Dendritic cell treated with granulocyte-macrophage colony-stimulating factor and Interleukin-4, amounts not matched to agents 40 ng/mL and 50 ng/mL, for 4 days (primary cell): ENCODE measurements at regions of chr7 and their contacts with region 1.

Region 1: GRCh38 chr7:88243345-88243909 is 23.6 kb upstream of the SRI start:
- H3K4me3 Mint-ChIP-seq: no peak overlapping the region
- H3K27ac Mint-ChIP-seq: peak overlapping the region; percentile 58
- H3K4me1 Mint-ChIP-seq: peaks cover 14% of the 10 kb centered on the region
- H3K27me3 Mint-ChIP-seq: no peaks in the 10 kb centered on the region

Region 2: DNA sequence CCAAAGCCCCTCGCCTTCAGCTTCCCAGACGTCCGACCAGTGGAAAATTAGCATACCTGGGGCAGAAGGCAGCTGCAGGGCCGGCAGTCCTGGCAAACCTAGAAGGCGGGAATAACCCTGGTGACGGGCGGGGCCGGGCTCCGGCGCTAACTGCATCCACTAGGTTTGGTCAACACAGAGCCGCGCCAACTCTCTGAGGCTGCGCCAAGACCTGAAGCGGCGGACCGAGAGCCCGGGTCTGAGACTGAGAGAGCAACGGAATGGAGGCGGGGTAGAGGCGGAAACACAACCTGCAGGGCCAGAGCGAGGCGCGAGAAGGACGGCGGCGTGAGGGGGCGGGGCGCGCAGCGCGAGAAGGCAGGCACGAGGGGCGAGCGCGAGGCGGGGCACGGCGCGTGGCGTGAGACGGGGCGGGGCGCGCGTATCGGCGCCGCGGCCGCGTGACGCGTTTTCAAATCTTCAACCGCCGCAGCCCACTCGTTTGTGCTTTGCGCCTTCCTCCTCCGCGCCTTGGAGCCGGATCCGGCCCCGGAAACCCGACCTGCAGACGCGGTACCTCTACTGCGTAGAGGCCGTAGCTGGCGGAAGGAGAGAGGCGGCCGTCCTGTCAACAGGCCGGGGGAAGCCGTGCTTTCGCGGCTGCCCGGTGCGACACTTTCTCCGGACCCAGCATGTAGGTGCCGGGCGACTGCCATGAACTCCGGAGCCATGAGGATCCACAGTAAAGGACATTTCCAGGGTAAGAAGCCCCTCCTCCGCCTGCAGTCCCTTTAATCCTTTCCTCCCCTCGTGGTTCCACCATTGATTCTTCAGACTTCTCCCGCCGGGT is 367.2 kb before region 1 on chr7 and contains the starts of genes DBF4 and SLC25A40:
- intact Hi-C with region 1: no loop called
- H3K4me3 Mint-ChIP-seq: peak within 1 kb of the TSS; percentile 96
- H3K27ac Mint-ChIP-seq: peak within 1 kb of the TSS; percentile 100
- H3K4me1 Mint-ChIP-seq: peaks cover 41% of the 10 kb centered on the region
- H3K27me3 Mint-ChIP-seq: no peaks in the 10 kb centered on the region

Region 3: GRCh38 chr7:88151119-88151790 is 92.2 kb before region 1 on chr7:
- intact Hi-C with region 1: no loop called
- H3K4me3 Mint-ChIP-seq: no peak overlapping the region
- H3K27ac Mint-ChIP-seq: no peak overlapping the region
- H3K4me1 Mint-ChIP-seq: peaks cover 9% of the 10 kb centered on the region
- H3K27me3 Mint-ChIP-seq: no peaks in the 10 kb centered on the region

Region 4: DNA sequence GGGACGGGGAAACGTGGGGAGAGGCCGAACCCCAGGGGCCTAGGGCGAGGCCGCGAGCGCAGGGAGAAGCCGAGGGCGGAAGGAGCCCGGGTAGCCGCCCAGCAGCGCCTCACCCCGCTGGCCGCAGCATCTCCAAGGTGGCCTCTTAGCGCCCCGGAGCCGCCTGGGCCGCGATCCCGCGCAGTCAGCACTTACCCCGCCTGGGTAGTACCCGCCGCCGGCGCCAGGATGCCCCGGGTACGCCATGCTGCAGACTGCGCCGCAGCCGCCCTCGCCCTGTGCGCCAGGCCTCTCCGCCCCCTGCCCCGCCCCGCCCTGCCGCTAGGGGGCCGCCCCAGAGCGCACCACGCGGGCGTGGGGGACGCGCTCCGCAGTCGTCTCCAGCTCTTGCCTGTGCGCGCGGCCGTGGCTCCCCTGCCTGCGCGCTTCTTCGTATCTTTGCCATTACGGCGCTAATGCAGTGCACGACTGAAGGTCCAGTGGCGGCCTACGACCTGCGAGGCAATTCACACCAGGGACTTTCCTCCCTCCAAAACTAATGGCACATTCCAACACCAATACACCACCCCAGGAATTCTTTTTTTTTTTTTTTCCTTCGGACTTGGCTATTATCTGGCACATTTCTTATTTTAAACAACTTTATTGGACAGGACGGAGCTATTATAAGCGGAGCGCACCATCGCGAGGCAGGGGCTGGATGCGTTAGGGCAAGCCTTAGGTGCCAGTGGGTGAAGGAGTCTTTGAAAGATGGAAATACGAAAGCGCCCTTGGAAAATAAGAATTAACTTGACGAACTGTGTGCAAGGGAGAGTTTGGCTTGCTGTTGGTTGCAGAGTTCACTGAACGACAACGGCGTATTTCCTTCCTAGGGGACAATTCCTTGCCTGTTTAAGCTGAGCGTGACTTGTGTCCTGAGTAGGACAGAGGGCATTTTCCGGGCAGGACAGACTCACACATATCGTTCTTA is 23.4 kb before region 1 on chr7 and contains the start of gene SRI:
- intact Hi-C with region 1: loop called (anchors 2 kb)
- H3K4me3 Mint-ChIP-seq: peak within 1 kb of the TSS; percentile 80
- H3K27ac Mint-ChIP-seq: peak within 1 kb of the TSS; percentile 95
- H3K4me1 Mint-ChIP-seq: peaks cover 25% of the 10 kb centered on the region
- H3K27me3 Mint-ChIP-seq: no peaks in the 10 kb centered on the region

Region 5: GRCh38 chr7:88268863-88269262 is 25.4 kb after region 1 on chr7:
- intact Hi-C with region 1: no loop called
- H3K4me3 Mint-ChIP-seq: no peak overlapping the region
- H3K27ac Mint-ChIP-seq: no peak overlapping the region
- H3K4me1 Mint-ChIP-seq: peaks cover 11% of the 10 kb centered on the region
- H3K27me3 Mint-ChIP-seq: no peaks in the 10 kb centered on the region

Region 6: DNA sequence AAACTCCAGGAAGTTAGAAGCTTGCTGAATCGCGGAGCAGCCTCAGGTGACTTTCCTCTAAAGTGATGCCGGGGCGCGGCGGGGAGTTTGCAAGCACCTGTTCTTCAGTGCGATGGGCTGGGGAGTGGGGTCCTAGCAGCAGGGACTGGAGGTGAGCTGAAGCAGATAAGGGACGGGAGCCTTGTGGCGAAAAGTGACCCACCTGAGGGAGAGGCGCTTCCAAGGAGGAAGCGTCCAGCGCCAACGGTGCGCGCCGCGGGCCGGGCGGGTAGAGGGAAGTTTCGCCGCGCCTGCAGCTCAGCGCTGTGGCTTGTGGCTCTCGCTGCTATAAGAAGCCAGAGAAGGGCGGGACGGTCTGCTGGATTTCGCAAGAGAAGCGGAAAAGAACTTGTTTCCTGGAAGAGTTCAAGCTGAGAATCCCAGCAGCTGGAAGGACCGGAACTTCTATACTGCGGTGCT is 63.2 kb after region 1 on chr7 and contains the start of gene STEAP4:
- intact Hi-C with region 1: loop called (anchors 10 kb)
- H3K4me3 Mint-ChIP-seq: peak within 1 kb of the TSS; percentile 73
- H3K27ac Mint-ChIP-seq: peak within 1 kb of the TSS; percentile 69
- H3K4me1 Mint-ChIP-seq: peaks cover 55% of the 10 kb centered on the region
- H3K27me3 Mint-ChIP-seq: no peaks in the 10 kb centered on the region

Region 7: GRCh38 chr7:88357781-88358525 is 114.5 kb after region 1 on chr7:
- intact Hi-C with region 1: loop called (anchors 1 kb)
- H3K4me3 Mint-ChIP-seq: peak overlapping the region; percentile 26
- H3K27ac Mint-ChIP-seq: no peak overlapping the region
- H3K4me1 Mint-ChIP-seq: peaks cover 33% of the 10 kb centered on the region
- H3K27me3 Mint-ChIP-seq: no peaks in the 10 kb centered on the region

Region 8: DNA sequence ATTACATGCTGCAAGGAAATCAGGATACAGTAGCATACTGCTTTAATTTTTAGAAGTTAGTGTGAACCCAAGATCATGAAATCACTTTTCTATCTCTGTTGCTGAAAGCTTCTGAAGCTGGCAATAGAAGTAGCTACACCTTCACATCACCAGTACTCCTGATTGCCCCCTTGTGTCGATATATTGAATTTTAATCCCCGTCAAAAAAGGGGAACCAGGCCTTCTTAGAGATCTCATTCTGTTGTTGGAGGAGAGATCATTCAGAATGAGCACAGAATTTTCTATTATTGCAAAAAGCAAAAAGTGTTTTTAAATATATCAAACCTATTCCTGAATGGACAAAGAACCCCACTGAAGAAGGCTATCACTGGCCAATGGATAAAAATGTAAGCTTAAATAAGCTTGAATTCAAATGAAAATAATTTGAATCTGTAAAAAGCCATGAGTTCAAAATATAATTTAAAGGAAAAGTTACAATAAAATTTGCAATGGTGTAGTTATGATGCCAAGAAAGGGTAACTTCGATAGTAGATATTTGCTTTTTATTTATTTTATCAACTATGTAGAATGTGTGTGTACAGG is 591.8 kb after region 1 on chr7:
- intact Hi-C with region 1: loop called (anchors 2 kb)
- H3K4me3 Mint-ChIP-seq: no peak overlapping the region
- H3K27ac Mint-ChIP-seq: no peak overlapping the region
- H3K4me1 Mint-ChIP-seq: no peaks in the 10 kb centered on the region
- H3K27me3 Mint-ChIP-seq: no peaks in the 10 kb centered on the region